Posterior vena cava (tissue), 2 donors: ENCODE measurements at regions of chr13 and their contacts with region 1.

Region 1: GRCh38 chr13:21465710-21466160 is 6.6 kb upstream of the ZDHHC20 start:
- DNase-seq: no peak

Region 2: DNA sequence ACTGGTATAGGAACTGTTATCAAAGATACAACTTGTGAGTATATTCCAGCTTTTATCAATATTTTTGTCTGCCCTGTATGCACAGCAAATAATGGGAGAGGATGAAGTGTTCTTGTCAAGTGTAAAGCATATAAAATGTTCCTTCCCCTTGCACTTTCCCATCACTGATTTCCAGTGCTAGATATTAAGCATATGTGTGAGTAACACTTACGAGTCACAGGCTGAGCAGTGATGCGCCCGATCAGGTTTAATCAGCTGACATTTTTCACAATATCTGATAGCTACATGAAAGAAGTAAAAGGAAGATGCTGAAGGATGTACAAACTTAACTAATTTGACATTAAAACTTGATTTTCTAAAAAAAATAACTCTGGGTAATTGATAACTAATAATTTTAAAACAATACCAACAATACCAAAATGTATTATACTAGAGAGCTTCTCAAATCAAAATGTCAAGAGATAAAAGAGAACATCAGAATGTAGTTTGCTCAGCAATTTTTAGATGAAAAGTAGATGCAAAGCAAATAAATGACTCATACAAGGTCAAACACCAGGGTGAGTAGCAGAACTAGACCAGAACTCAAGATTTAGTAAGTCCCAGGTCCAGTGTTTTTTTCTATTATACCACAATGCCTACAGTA is 63.0 kb before region 1 on chr13:
- intact Hi-C with region 1: no loop called
- DNase-seq: no peak

Region 3: GRCh38 chr13:21486322-21486721 is 20.6 kb after region 1 on chr13:
- intact Hi-C with region 1: loop called in 1 of 2 experiments (anchors 1 kb)
- DNase-seq: no peak

Region 4: DNA sequence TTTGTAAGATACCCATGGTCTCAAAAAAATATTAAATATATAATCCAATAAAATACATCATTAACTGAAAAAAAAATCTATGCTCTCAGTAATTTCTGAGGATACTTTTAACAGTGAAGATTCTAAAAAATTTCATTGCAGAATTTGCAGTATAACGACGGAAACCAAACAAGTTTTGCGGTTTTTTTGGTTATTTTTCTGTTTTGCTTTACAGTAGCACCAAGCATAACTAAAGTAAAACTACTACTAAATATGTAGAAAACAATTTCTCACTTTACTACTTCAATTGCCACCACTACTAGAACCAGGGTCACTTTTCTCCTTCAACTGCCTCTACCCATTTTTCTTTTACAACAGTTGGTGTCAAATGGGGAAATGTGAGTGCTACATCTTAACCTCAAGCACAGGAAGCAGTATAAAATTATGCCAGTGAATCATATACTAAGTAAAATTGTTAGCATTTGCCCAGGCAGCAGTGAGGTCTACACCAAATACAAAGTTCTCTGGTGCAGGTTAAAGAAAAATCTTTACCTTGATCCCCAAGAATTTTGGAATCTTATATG is 114.1 kb after region 1 on chr13:
- intact Hi-C with region 1: no loop called
- DNase-seq: no peak